GM12878 (cell line): ENCODE measurements at regions of chr16 and their contacts with region 1.

Region 1: GRCh38 chr16:11949527-11949926 is 7.7 kb upstream of the NPIPB2 start:
- DNase-seq: no peak
- ATAC-seq: peak; percentile 99
- H3K4me3 ChIP-seq: no peak overlapping the region
- H3K27ac ChIP-seq: no peak overlapping the region
- H3K4me1 ChIP-seq: peaks cover 9% of the 10 kb centered on the region
- H3K27me3 ChIP-seq: no peaks in the 10 kb centered on the region
- CTCF ChIP-seq: peak; percentile 73 to 82 (median 75)
- EP300 ChIP-seq: no peak
- POLR2A ChIP-seq: no peak
- RAD21 ChIP-seq: peak; percentile 97

Region 2: GRCh38 chr16:11977376-11978041 is 28.0 kb after region 1 on chr16:
- CTCF ChIA-PET with region 1: interaction called, 7 read pairs
- POLR2A ChIA-PET with region 1: interaction called, 4 read pairs
- RAD21 ChIA-PET with region 1: interaction called, 6 read pairs
- SMC1A ChIA-PET with region 1: interaction called, 8 read pairs
- in situ Hi-C with region 1: no loop called
- intact Hi-C with region 1: loop called (anchors 1 kb)
- DNase-seq: no peak
- ATAC-seq: no peak
- H3K4me3 ChIP-seq: peak overlapping the region; percentile 96
- H3K27ac ChIP-seq: peak overlapping the region; percentile 88
- H3K4me1 ChIP-seq: peaks cover 14% of the 10 kb centered on the region
- H3K27me3 ChIP-seq: no peaks in the 10 kb centered on the region
- CTCF ChIP-seq: no peak
- EP300 ChIP-seq: no peak
- POLR2A ChIP-seq: no peak
- RAD21 ChIP-seq: no peak

Region 3: GRCh38 chr16:11994143-11995119 is 44.9 kb after region 1 on chr16:
- CTCF ChIA-PET with region 1: interaction called, 11 read pairs
- POLR2A ChIA-PET with region 1: no interaction called
- RAD21 ChIA-PET with region 1: interaction called, 4 read pairs
- SMC1A ChIA-PET with region 1: interaction called, 10 read pairs
- in situ Hi-C with region 1: no loop called
- intact Hi-C with region 1: no loop called
- DNase-seq: no peak
- ATAC-seq: peak; percentile 69
- H3K4me3 ChIP-seq: no peak overlapping the region
- H3K27ac ChIP-seq: peak overlapping the region; percentile 38; the same call in 1 of the 2 replicates
- H3K4me1 ChIP-seq: peaks cover 7% of the 10 kb centered on the region
- H3K27me3 ChIP-seq: no peaks in the 10 kb centered on the region
- CTCF ChIP-seq: peak in 1 of 3 experiments; percentile 10; a peak in 1 of 6 replicates
- EP300 ChIP-seq: no peak
- POLR2A ChIP-seq: no peak
- RAD21 ChIP-seq: no peak

Region 4: GRCh38 chr16:12062343-12063005 is 112.9 kb after region 1 on chr16:
- CTCF ChIA-PET with region 1: interaction called, 85 read pairs
- POLR2A ChIA-PET with region 1: interaction called, 6 read pairs
- RAD21 ChIA-PET with region 1: interaction called, 68 read pairs
- SMC1A ChIA-PET with region 1: interaction called, 61 read pairs
- in situ Hi-C with region 1: loop called (anchors 5 kb)
- intact Hi-C with region 1: no loop called
- DNase-seq: no peak
- ATAC-seq: no peak
- H3K4me3 ChIP-seq: no peak overlapping the region
- H3K27ac ChIP-seq: no peak overlapping the region
- H3K4me1 ChIP-seq: peaks cover 11% of the 10 kb centered on the region
- H3K27me3 ChIP-seq: no peaks in the 10 kb centered on the region
- CTCF ChIP-seq: no peak
- EP300 ChIP-seq: no peak
- POLR2A ChIP-seq: no peak
- RAD21 ChIP-seq: no peak